ENCODE measurements at regions of chr4 and their contacts with region 1.

Region 1: GRCh38 chr4:15231265-15232091 is 196.4 kb upstream of the C1QTNF7 start:
- DNase-seq: peak in 1 of 2 donors; percentile 92
- H3K4me3 ChIP-seq: no peak overlapping the region
- H3K27ac ChIP-seq: peak overlapping the region; percentile 66 to 86
- H3K4me1 ChIP-seq: peaks cover 21 to 41% of the 10 kb centered on the region in 2 donors
- H3K27me3 ChIP-seq: no peaks in the 10 kb centered on the region
- CTCF ChIP-seq: peak; percentile 57 to 77 (median 70)

Region 2: GRCh38 chr4:15368856-15369255 is 137.4 kb after region 1 on chr4:
- intact Hi-C with region 1: no loop called
- DNase-seq: no peak
- H3K4me3 ChIP-seq: no peak overlapping the region
- H3K27ac ChIP-seq: no peak overlapping the region
- H3K4me1 ChIP-seq: peaks cover 0 to 23% of the 10 kb centered on the region in 2 donors
- H3K27me3 ChIP-seq: no peaks in the 10 kb centered on the region
- CTCF ChIP-seq: no peak

Region 3: GRCh38 chr4:15396157-15396800 is 164.8 kb after region 1 on chr4:
- intact Hi-C with region 1: loop called (anchors 5 kb)
- DNase-seq: no peak
- H3K4me3 ChIP-seq: no peak overlapping the region
- H3K27ac ChIP-seq: peak overlapping the region; percentile 44 to 90
- H3K4me1 ChIP-seq: peaks cover 16 to 74% of the 10 kb centered on the region in 2 donors
- H3K27me3 ChIP-seq: no peaks in the 10 kb centered on the region
- CTCF ChIP-seq: peak in 2 of 3 experiments; percentile 49 to 56

Region 4: DNA sequence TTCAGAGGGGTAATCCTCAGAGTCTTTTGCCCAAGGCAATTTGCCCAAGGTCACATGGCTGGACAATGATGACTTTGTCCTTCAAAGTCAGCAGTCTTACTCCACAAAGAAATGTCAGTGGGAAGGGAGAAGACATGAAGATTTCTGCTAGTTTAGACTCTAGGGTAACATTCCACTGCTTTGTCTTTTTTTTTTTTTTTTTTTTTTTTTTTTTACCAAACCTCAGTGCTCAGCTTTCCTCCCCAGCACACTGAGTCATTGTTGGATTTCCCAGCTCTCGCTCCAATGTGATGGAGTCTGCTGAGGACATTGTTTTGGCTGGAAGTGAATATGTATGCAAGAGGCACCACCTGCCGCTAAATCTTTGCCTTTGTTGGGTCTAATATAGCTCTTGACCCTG is 189.2 kb after region 1 on chr4:
- intact Hi-C with region 1: loop called (anchors 2 kb)
- DNase-seq: no peak
- H3K4me3 ChIP-seq: no peak overlapping the region
- H3K27ac ChIP-seq: peak overlapping the region; percentile 67 to 77
- H3K4me1 ChIP-seq: peaks cover 10 to 77% of the 10 kb centered on the region in 2 donors
- H3K27me3 ChIP-seq: no peaks in the 10 kb centered on the region
- CTCF ChIP-seq: peak in 1 of 3 experiments; percentile 18

Region 5: DNA sequence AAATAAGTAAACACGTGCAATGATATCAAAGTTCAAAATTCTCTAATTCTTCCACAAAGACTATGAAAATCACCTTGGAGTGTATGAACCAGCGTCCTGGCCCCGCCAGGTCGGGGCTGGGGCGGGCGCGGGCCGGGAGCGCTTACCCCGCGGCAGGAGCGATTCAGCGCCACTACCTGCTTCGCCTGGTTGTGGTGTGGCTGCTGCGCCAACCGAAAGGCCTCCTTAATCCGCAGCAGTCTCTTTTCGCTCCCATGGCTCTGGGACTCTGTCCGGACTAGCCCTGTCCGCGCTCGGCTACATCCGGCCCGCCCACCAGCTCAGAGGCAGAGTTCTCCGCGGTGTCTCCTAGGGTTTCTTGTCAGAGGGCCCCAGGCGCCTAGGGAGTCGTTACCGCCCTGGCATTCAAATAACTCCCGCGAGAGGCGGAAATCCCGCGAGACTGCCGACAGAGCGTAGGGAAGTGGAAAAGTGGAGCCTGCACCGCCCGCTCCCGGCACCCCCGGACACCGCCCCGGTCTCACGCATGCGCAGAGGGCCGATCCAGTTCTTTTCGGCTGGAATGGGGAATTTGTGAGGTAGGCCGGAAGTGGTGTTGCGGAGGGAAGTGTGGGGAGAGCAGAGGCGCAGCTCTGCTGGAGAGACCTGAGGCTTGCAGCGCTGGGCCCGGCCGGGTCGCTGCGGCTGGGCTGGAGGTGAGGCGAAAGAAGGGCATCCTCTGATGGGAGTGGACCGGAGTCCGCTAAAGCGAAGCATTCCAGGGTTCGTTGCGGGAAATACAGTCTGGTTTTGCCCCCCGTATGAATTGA is 449.9 kb after region 1 on chr4 and contains the start of gene FAM200B:
- intact Hi-C with region 1: loop called (anchors 10 kb)
- DNase-seq: peak; percentile 90 to 99
- H3K4me3 ChIP-seq: peak within 1 kb of the TSS; percentile 80 to 82
- H3K27ac ChIP-seq: peak within 1 kb of the TSS; percentile 85 to 96
- H3K4me1 ChIP-seq: peaks cover 2 to 4% of the 10 kb centered on the region in 2 donors
- H3K27me3 ChIP-seq: no peaks in the 10 kb centered on the region
- CTCF ChIP-seq: peak in 1 of 3 experiments; percentile 12
- total RNA-seq, gene FAM200B: 34.9 TPM

Measured in ascending aorta (tissue), 2 donors.